ENCODE measurements at regions of chr12 and their contacts with region 1.

Region 1: DNA sequence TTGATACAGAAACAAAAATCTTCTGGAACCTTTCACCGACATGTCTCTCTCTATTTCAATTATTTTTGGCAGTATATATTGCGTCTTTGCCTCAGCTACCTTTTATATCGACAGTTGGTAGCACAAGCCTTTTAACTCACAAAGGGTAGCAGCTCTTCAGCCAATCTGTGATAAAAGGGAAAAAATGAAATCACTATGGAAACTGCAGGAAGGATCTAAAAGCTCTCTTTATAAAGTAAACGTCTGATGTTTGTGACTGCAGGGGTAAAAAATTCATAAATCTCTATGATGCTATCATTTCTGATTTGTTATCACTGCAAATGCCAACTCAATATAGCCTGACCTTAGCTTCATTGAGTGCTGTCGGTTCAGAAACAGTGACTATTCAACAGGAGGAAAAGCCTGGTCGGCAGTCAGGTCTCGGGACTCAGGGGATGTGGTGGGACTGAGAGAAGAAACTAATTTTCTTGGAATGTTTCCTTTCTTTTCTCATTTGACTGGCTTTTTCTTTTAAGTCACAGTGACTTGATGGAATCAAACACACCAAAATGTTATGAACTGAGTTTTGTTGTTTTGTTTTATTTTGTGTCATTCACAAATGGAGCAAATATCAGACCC is 5.9 kb upstream of the RMST start:
- DNase-seq: no peak
- H3K4me3 ChIP-seq: no peak overlapping the region
- H3K27ac ChIP-seq: no peak overlapping the region
- H3K4me1 ChIP-seq: no peaks in the 10 kb centered on the region
- H3K27me3 ChIP-seq: no peaks in the 10 kb centered on the region
- CTCF ChIP-seq: no peak

Region 2: DNA sequence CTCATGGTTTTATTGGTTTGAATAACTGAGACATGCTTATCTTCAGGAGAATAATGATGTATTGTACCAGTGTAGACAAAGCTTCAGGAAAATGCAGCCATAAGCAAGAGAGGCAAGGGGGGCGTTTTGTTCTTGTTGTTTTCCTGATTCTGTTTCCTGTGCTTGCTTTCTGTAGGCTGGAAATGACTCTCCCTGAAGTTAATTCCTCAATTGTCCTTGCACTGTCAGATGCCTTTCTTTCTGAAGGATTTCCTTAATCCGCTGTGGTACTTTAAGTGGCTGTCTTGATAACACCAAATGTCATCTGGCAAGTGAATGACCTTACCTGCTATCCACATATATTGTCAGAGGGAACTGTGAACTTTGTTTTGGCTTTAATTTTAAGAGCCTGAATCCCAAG is 329.6 kb before region 1 on chr12:
- intact Hi-C with region 1: no loop called
- DNase-seq: no peak
- H3K4me3 ChIP-seq: no peak overlapping the region
- H3K27ac ChIP-seq: no peak overlapping the region
- H3K4me1 ChIP-seq: no peaks in the 10 kb centered on the region
- H3K27me3 ChIP-seq: no peaks in the 10 kb centered on the region
- CTCF ChIP-seq: no peak

Region 3: DNA sequence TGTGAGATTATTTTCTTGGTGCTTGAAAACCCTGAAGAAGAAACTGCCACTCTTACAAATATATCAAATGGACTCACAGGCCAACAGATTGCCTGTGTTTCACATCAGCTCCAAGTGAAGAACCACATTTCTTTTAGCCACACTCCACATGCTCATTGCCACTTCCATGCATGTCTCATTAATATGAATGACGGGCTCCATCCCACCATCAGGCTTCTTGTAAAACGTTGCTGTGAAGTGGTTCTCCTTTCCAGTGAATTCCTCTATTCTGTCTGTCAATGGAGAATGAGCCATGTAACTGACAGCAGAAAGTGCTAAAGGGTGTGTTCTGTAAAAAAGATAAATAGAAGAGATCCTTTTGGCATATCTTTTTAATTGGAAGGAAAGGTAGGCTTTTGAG is 182.3 kb before region 1 on chr12:
- intact Hi-C with region 1: loop called (anchors 5 kb)
- DNase-seq: no peak
- H3K4me3 ChIP-seq: no peak overlapping the region
- H3K27ac ChIP-seq: no peak overlapping the region
- H3K4me1 ChIP-seq: no peaks in the 10 kb centered on the region
- H3K27me3 ChIP-seq: peaks cover 0 to 3% of the 10 kb centered on the region in 2 donors
- CTCF ChIP-seq: no peak

Region 4: DNA sequence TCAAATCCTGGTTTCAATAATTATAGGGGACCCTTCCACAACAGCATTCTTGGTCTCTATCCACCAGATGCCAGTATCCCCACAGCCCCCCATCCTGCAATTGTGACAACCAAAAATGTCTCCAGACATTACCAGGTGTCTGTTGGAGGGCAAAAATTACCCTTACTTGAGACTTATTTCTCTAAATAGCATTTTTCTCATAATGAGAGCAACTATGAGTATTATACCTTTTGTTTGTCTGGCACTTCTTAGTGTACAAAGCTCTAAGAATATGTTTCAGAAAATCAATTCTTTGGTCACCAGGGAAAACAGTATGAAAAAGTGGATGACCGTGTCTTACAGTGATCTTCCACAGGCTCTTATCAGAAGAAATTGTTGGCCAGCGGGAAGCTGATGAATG is 21.5 kb before region 1 on chr12:
- intact Hi-C with region 1: no loop called
- DNase-seq: no peak
- H3K4me3 ChIP-seq: no peak overlapping the region
- H3K27ac ChIP-seq: no peak overlapping the region
- H3K4me1 ChIP-seq: no peaks in the 10 kb centered on the region
- H3K27me3 ChIP-seq: no peaks in the 10 kb centered on the region
- CTCF ChIP-seq: no peak

Region 5: DNA sequence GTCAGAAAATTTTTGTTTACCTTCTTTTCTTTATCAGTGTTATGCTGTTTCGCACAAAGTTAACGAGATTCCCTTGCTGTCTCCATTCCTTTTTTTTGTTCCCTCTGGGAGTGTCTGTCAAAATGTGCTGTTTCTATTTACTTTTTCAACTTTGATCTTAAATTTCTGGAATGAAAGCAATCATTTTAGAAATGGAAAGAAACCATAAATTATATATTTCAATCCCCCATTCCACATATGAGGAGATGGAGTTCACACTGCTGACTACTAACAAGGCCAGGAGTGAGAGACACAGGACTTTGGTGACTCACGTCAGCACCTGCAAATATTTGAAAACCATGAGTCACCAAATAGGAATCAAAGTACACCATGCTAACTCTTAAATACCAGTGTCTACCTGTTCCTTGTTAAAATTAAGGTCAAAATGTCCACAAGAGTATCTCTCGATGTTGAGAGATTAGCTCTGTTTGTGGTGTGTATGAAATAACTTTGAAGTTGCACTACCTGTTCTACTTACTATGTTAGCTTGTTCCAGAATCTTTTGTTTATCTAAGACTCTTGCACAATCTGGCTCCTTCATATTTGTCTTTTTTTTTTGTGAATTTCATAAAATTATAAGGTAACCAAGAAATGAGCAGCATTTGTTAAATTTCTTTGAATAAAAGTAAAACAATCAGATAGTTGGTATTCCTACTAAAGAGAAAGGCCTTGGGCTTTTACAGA is 111.9 kb after region 1 on chr12:
- intact Hi-C with region 1: no loop called
- DNase-seq: no peak
- H3K4me3 ChIP-seq: no peak overlapping the region
- H3K27ac ChIP-seq: no peak overlapping the region
- H3K4me1 ChIP-seq: no peaks in the 10 kb centered on the region
- H3K27me3 ChIP-seq: no peaks in the 10 kb centered on the region
- CTCF ChIP-seq: no peak

Region 6: GRCh38 chr12:97848051-97848450 is 391.4 kb after region 1 on chr12:
- intact Hi-C with region 1: no loop called
- DNase-seq: no peak
- H3K4me3 ChIP-seq: no peak overlapping the region
- H3K27ac ChIP-seq: no peak overlapping the region
- H3K4me1 ChIP-seq: no peaks in the 10 kb centered on the region
- H3K27me3 ChIP-seq: no peaks in the 10 kb centered on the region
- CTCF ChIP-seq: no peak